Breast epithelium (tissue), 4 donors: ENCODE measurements at regions of chr17 and their contacts with region 1.

Region 1: GRCh38 chr17:41635121-41636097 is 11.0 kb upstream of the KRT17 start:
- DNase-seq: no peak
- H3K4me3 ChIP-seq: peak overlapping the region in 1 of 3 donors; percentile 52
- H3K27ac ChIP-seq: peak overlapping the region; percentile 43 to 68
- H3K4me1 ChIP-seq: peaks cover 0 to 6% of the 10 kb centered on the region in 2 donors
- H3K27me3 ChIP-seq: no peaks in the 10 kb centered on the region
- CTCF ChIP-seq: no peak
- POLR2A ChIP-seq: no peak

Region 2: GRCh38 chr17:41548844-41549595 is 86.4 kb before region 1 on chr17:
- intact Hi-C with region 1: loop called (anchors 10 kb)
- DNase-seq: peak; percentile 88 to 93
- H3K4me3 ChIP-seq: peak overlapping the region; percentile 10 to 60 (median 40)
- H3K27ac ChIP-seq: peak overlapping the region; percentile 78 to 94
- H3K4me1 ChIP-seq: peaks cover 12% of the 10 kb centered on the region in 2 donors
- H3K27me3 ChIP-seq: no peaks in the 10 kb centered on the region
- CTCF ChIP-seq: peak; percentile 82 to 95 (median 85)
- POLR2A ChIP-seq: no peak

Region 3: GRCh38 chr17:41567317-41567716 is 68.1 kb before region 1 on chr17:
- intact Hi-C with region 1: no loop called
- DNase-seq: no peak
- H3K4me3 ChIP-seq: no peak overlapping the region
- H3K27ac ChIP-seq: no peak overlapping the region
- H3K4me1 ChIP-seq: no peaks in the 10 kb centered on the region
- H3K27me3 ChIP-seq: no peaks in the 10 kb centered on the region
- CTCF ChIP-seq: no peak
- POLR2A ChIP-seq: no peak